ENCODE measurements at regions of chr11 and their contacts with region 1.

Region 1: DNA sequence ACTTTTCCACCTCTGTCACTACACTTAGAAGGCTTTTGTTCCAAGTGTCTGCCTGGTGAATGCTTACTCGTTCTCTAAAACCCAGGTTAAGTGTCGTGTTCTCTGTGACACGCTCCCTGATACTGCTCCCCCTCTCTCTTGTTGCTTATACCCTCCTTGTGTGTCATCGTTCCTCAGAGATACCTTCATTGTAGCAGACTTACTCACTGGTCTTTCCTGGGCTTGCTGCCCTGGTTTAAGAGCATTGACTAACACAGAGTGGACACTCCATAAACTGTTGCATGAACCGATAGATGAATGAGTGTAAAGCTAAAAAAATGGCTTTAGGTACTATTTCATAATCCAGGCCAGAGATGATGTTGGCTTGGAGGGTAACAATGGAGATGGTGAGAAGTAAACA is 171.3 kb downstream of the GRIK4 start:
- DNase-seq: no peak
- ATAC-seq: no peak
- H3K4me3 Mint-ChIP-seq: no peak overlapping the region
- H3K27ac Mint-ChIP-seq: no peak overlapping the region
- H3K4me1 Mint-ChIP-seq: no peaks in the 10 kb centered on the region
- H3K27me3 Mint-ChIP-seq: peaks cover 9% of the 10 kb centered on the region
- CTCF ChIP-seq: no peak

Region 2: GRCh38 chr11:120696597-120697218 is 13.8 kb after region 1 on chr11:
- CTCF ChIA-PET with region 1: interaction called, 13 read pairs
- POLR2A ChIA-PET with region 1: no interaction called
- intact Hi-C with region 1: no loop called
- DNase-seq: no peak
- ATAC-seq: no peak
- H3K4me3 Mint-ChIP-seq: no peak overlapping the region
- H3K27ac Mint-ChIP-seq: no peak overlapping the region
- H3K4me1 Mint-ChIP-seq: no peaks in the 10 kb centered on the region
- H3K27me3 Mint-ChIP-seq: peaks cover 4% of the 10 kb centered on the region
- CTCF ChIP-seq: no peak

Region 3: GRCh38 chr11:121018746-121019145 is 335.9 kb after region 1 on chr11:
- CTCF ChIA-PET with region 1: no interaction called
- POLR2A ChIA-PET with region 1: no interaction called
- intact Hi-C with region 1: no loop called
- DNase-seq: no peak
- ATAC-seq: no peak
- H3K4me3 Mint-ChIP-seq: no peak overlapping the region
- H3K27ac Mint-ChIP-seq: no peak overlapping the region
- H3K4me1 Mint-ChIP-seq: peaks cover under 1% of the 10 kb centered on the region
- H3K27me3 Mint-ChIP-seq: peaks cover 3% of the 10 kb centered on the region
- CTCF ChIP-seq: no peak

Measured in activated CD8-positive, alpha-beta T cell treated with anti-CD3 and anti-CD28 coated beads for 36 hours (primary cell).